Panc1 (cell line): ENCODE measurements at regions of chrX and their contacts with region 1.

Region 1: DNA sequence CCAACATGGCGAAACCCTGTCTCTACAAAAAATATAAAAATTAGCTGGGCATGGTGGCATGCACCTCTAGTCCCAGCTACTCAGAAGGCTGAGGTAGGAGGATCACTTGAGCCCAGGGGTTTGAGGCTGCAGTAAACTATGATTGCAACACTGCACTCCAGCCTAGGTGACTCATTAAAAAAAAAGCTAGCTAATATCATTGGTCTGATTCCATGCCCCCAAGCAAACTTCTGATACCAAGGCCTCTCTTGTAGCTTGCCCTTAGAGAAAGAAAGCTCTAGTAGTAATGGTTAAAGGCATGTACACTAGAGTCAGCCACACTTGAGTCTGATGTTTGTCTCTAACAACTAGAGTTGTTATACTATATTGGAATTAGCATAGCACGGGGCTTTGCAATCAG is 32.6 kb upstream of the PHF8 start:
- DNase-seq: peak; percentile 0
- ATAC-seq: 0 out of 2 replicates have a peak, but pooled peaks have one; percentile 17
- H3K4me3 ChIP-seq: no peak overlapping the region
- H3K27ac ChIP-seq: no peak overlapping the region
- H3K4me1 ChIP-seq: no peaks in the 10 kb centered on the region
- H3K27me3 ChIP-seq: no peaks in the 10 kb centered on the region
- CTCF ChIP-seq: no peak

Region 2: GRCh38 chrX:53330331-53330730 is 746.6 kb before region 1 on chrX:
- CTCF ChIA-PET with region 1: no interaction called
- POLR2A ChIA-PET with region 1: interaction called, 12 read pairs
- in situ Hi-C with region 1: no loop called
- intact Hi-C with region 1: no loop called
- DNase-seq: no peak
- ATAC-seq: no peak
- H3K4me3 ChIP-seq: no peak overlapping the region
- H3K27ac ChIP-seq: no peak overlapping the region
- H3K4me1 ChIP-seq: no peaks in the 10 kb centered on the region
- H3K27me3 ChIP-seq: peaks cover 4% of the 10 kb centered on the region
- CTCF ChIP-seq: no peak

Region 3: GRCh38 chrX:54063361-54063760 is 13.5 kb before region 1 on chrX:
- CTCF ChIA-PET with region 1: no interaction called
- POLR2A ChIA-PET with region 1: interaction called, 16 read pairs
- in situ Hi-C with region 1: no loop called
- intact Hi-C with region 1: no loop called
- DNase-seq: no peak
- ATAC-seq: no peak
- H3K4me3 ChIP-seq: no peak overlapping the region
- H3K27ac ChIP-seq: no peak overlapping the region
- H3K4me1 ChIP-seq: no peaks in the 10 kb centered on the region
- H3K27me3 ChIP-seq: no peaks in the 10 kb centered on the region
- CTCF ChIP-seq: no peak